ENCODE measurements at regions of chr22 and their contacts with region 1.

Region 1: DNA sequence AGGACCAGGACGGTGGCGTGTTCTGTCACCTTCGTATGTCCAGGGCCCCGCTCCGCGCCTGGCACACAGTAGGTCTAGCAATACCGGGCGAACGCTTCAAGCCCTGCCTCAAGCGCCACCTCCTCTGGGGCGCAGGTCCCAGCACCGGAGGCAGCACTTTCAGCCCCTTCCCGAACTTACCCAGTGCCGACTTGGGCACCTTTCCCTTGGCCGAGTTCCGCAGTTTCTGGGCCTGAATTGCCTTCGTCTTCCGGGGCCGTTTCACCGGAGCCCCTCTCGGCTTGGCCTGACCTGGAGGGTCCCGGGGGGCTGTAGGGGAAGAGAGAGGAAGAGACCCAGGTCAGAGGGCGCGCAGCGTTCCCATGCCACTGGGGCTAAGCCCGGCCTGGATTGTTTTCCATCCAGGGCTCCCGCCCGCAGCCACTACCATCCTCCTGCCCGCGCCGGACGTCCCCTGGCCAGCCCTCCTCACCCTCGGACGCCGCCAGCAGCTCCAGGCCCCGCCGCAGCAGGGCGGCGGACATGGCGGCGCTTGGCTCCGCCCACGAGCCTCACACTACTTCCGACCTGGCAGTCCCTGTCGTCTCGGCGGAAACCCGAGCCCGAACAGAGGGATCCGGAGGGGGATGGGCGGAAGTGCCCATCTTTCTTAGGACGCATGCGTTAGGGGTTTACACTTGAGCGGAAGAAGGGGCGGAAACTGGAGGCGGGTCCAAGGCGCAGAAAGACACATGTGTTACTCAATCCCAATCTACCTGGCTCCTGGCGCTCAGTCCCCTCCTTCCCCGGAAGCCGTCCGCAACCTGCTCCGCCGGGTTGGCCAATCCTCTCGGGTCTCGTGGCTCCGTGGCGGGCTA is at the start of gene RPS19BP1:
- DNase-seq: peak; percentile 99
- ATAC-seq: peak; percentile 83
- H3K4me3 ChIP-seq: peak within 1 kb of the TSS; percentile 97 to 100
- H3K27ac ChIP-seq: peak within 1 kb of the TSS; percentile 94
- H3K4me1 ChIP-seq: peaks cover 36 to 57% of the 10 kb centered on the region in 2 experiments
- H3K27me3 ChIP-seq: no peaks in the 10 kb centered on the region
- CTCF ChIP-seq: no peak
- POLR2A ChIP-seq: peak; percentile 80
- RAD21 ChIP-seq: no peak
- total RNA-seq, gene RPS19BP1: 80.4 TPM

Region 2: DNA sequence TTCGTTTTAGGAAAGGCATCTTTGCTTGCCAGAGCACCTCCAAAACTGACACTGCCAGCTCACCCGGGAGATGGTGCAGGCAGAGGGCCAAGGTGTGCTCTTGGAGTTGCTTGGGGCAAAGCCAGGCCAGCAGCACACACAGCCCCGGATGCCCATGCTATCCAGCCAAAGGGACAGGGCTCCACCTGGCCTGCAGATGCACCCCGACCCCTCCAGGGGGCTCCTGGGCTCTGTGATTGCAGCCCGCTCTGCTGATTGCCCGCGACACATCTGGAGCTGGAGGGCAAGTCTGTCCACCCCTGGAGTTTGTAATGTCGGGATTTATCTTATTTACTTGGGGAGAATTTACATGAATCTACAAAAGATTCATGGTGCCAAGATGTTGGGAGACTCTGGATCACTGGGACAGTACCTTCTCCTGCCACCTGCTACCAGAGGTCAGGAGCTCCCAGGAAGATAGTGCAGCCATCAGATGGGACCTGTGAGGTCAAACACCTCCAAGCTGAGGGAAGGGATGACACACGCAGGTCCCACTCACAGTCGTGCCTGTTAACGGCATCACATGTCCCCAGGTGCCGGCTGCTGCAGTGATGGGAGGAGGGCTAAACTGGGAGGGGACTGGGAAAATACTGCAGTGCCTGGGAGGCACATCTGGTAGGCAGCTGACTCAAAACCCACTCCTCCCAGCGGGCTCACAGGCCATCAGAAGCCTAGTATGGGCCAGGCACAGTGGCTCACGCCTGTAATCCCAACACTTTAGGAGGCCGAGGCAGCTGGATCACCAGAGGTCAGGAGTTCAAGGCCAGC is 397.1 kb before region 1 on chr22:
- CTCF ChIA-PET with region 1: interaction called, 11 read pairs
- POLR2A ChIA-PET with region 1: no interaction called
- RAD21 ChIA-PET with region 1: no interaction called
- intact Hi-C with region 1: no loop called
- DNase-seq: peak; percentile 7
- ATAC-seq: peak; percentile 95
- H3K4me3 ChIP-seq: no peak overlapping the region
- H3K27ac ChIP-seq: no peak overlapping the region
- H3K4me1 ChIP-seq: no peaks in the 10 kb centered on the region; a peak in 1 of 4 replicates
- H3K27me3 ChIP-seq: no peaks in the 10 kb centered on the region
- CTCF ChIP-seq: peak; percentile 55 to 81 (median 76)
- POLR2A ChIP-seq: no peak
- RAD21 ChIP-seq: peak; percentile 80

Region 3: DNA sequence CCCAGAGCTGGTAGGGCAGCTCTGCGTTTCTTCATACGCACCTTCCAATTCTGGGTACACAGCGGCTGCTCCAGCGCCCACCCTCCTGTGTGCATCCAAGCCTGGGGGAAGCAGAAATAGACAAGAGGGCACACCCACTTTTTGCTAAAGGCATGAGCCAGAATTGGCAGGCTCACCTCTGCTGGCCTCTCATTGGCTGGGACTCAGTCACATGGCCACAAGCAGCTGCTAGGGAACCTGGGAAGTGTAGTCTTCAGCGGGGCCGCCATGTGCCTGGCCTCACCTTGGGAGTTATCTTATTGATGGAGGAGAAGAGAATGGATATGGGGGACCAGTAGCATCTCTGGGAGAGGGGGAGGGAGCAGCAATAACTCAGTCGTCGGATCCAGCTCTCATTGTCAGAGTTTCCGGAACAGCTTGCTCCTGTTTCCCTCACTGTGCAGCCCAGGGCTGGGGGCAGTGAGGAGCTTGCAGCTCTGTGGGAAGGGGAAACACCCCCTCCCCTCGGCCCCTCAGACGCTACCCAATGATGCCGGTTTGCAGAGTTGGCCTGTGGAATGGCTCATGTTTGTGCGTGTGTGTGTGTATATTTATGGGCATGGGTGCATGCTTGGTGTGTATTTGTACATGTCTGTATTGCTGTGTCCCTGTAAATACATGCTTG is 42.2 kb before region 1 on chr22:
- CTCF ChIA-PET with region 1: interaction called, 86 read pairs
- POLR2A ChIA-PET with region 1: no interaction called
- RAD21 ChIA-PET with region 1: no interaction called
- intact Hi-C with region 1: no loop called
- DNase-seq: peak; percentile 79
- ATAC-seq: peak; percentile 98
- H3K4me3 ChIP-seq: no peak overlapping the region
- H3K27ac ChIP-seq: no peak overlapping the region; the same call in 1 of the 2 replicates
- H3K4me1 ChIP-seq: peaks cover 0 to 16% of the 10 kb centered on the region in 2 experiments; a peak in 3 of 4 replicates
- H3K27me3 ChIP-seq: no peaks in the 10 kb centered on the region
- CTCF ChIP-seq: no peak
- POLR2A ChIP-seq: no peak
- RAD21 ChIP-seq: no peak

Region 4: GRCh38 chr22:39502109-39502788 is 30.2 kb before region 1 on chr22 and contains the start of gene MIEF1:
- CTCF ChIA-PET with region 1: interaction called, 86 read pairs
- POLR2A ChIA-PET with region 1: interaction called, 4 read pairs
- RAD21 ChIA-PET with region 1: no interaction called
- intact Hi-C with region 1: no loop called
- DNase-seq: peak; percentile 94
- ATAC-seq: peak; percentile 93
- H3K4me3 ChIP-seq: peak within 1 kb of the TSS; percentile 92 to 97
- H3K27ac ChIP-seq: peak within 1 kb of the TSS; percentile 70
- H3K4me1 ChIP-seq: peaks cover 16 to 29% of the 10 kb centered on the region in 2 experiments
- H3K27me3 ChIP-seq: no peaks in the 10 kb centered on the region
- CTCF ChIP-seq: no peak
- POLR2A ChIP-seq: peak; percentile 65
- RAD21 ChIP-seq: no peak
- total RNA-seq, gene MIEF1: 42.8 TPM

Region 5: DNA sequence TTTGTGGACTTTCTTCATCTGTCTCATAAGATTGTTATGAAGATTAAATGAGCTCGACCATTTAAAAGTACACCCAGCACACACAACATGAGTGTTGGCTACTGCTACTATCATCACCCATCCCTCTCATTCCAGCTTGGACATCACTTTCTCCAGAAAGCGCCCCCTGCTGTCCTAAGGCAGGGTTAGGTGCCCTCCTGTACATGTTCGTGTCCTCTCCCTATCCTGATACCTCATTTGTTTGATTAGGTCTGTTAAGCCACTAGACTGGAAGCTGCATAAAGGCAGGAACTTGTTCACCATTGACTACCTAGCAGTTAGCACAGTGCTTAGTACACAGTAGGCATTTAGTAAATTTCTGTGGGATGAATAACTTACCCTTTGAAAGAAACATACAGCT is 275.6 kb after region 1 on chr22:
- CTCF ChIA-PET with region 1: interaction called, 5 read pairs
- POLR2A ChIA-PET with region 1: no interaction called
- RAD21 ChIA-PET with region 1: no interaction called
- intact Hi-C with region 1: loop called (anchors 2 kb)
- DNase-seq: peak; percentile 31
- ATAC-seq: peak; percentile 80
- H3K4me3 ChIP-seq: no peak overlapping the region
- H3K27ac ChIP-seq: no peak overlapping the region
- H3K4me1 ChIP-seq: no peaks in the 10 kb centered on the region
- H3K27me3 ChIP-seq: peaks cover 66% of the 10 kb centered on the region
- CTCF ChIP-seq: peak; percentile 49 to 70 (median 70); a peak in 5 of 6 replicates
- POLR2A ChIP-seq: no peak
- RAD21 ChIP-seq: peak; percentile 48

Region 6: DNA sequence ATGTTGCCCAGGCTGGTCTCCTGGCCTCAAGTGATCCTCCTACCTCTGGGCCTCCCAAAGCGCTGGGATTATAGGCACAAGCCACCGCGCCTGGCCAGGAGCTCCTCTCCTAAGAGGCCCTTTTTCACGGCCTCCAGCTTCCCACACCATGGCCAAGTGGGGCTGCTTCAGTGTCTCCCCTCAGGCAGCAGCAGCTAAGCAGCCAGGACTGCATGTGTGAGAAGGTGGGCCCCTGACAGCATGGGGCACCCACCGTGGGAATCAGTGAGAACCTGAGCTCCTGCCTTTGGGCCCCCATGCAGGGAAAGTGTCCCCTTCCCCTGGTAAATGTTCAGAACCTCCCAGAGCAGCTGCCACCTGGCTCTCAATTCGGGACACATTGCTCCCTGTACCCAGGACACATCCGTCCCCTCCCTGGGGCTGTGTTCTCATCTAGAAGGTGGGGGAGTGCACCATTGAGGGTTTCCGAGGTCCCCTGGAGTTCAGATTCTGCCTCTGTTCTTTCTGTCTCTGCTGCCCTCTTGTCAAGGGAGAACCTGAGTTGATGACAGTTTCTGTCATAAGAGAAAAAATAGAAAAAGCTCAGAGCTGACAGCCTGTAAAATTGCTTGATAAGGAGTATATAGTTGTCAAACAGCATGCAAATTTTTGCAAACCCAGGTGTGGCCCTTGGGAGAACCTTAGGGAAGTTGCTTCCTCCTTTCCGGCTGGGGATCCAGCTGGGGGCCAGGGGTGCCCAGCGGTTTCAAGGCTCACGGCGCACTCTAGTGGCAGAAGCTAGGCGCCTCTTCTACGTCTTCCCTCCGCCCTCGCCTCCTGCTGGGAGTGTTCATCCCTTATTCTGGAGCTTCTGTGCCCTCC is 492.0 kb after region 1 on chr22:
- CTCF ChIA-PET with region 1: interaction called, 16 read pairs
- POLR2A ChIA-PET with region 1: no interaction called
- RAD21 ChIA-PET with region 1: interaction called, 3 to 4 read pairs
- intact Hi-C with region 1: loop called (anchors 1 kb)
- DNase-seq: peak; percentile 24
- ATAC-seq: peak; percentile 91
- H3K4me3 ChIP-seq: no peak overlapping the region
- H3K27ac ChIP-seq: no peak overlapping the region
- H3K4me1 ChIP-seq: no peaks in the 10 kb centered on the region
- H3K27me3 ChIP-seq: no peaks in the 10 kb centered on the region
- CTCF ChIP-seq: peak; percentile 87 to 90 (median 89)
- POLR2A ChIP-seq: no peak
- RAD21 ChIP-seq: peak; percentile 94

Region 7: DNA sequence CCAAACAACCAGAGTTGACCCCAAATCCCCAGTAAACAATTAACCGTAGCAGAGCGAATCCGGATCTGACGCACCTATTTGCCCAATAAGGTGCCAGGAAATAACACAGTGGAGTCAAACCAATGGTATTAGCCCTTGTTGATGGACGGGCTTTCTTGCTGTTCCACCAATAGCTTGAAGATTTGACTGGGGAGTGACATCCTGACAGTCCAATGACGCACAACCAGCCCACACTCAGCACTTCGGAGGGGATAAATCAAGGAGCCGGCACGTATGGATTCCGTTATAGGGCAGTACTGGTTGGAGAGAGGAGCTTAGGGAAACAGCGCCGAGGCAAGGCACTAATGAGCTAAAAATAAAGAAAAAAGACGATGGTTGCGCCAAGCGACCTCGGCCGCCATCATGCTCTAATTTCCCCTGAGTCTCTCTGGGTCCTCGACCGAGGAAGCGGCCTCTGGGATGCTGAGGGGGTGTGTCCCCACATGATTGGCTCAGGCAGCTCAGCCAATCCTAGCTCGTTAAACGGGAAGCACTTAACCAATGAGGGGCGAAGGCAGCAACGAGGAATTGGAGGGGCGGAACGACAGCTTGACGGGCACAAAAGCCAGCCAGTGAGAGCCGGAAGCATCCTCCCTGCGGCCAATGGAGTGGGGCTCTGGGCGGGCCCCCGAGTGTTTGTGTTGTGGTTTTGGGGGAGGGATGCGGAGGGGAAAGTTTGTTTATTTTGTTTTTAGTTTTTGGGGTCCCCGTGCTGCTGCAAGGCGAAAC is 511.8 kb after region 1 on chr22:
- CTCF ChIA-PET with region 1: interaction called, 12 read pairs
- POLR2A ChIA-PET with region 1: interaction called, 3 read pairs
- RAD21 ChIA-PET with region 1: no interaction called
- intact Hi-C with region 1: no loop called
- DNase-seq: peak; percentile 98
- ATAC-seq: peak; percentile 91
- H3K4me3 ChIP-seq: peak overlapping the region; percentile 57 to 68
- H3K27ac ChIP-seq: peak overlapping the region; percentile 65
- H3K4me1 ChIP-seq: peaks cover 8 to 17% of the 10 kb centered on the region in 2 experiments
- H3K27me3 ChIP-seq: no peaks in the 10 kb centered on the region
- CTCF ChIP-seq: no peak
- POLR2A ChIP-seq: no peak
- RAD21 ChIP-seq: no peak

Measured in HCT116 (cell line).